ENCODE measurements at regions of chr13 and their contacts with region 1.

Region 1: DNA sequence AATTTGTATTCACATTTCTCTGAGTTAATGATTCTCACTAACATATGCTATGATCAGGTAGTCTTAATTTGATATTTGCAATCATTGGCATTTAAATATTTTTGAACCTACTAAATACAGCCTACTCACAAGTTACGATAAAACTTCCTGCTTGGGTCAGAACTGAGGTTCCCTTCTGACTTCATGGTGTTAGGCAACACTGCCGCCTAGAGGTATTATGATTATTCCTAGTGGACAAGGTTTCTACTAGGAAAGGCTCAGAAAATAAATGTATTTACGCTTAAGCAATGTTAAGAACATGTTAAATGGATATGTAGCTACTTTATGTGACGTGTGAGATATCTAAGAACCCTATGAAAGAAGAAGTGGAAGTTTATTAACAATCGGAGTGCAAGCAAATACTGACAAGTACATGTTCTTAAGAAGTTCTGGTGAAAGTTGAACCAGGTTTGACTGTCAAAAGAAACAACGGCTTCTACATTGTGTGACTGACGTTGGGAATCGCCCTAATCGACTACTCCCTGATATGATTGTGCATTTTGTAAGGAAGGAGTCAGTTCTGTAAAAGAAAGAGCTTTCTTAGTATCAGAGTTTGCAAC is 1395.8 kb downstream of the SLITRK5 start:
- DNase-seq: peak; percentile 12
- ATAC-seq: no peak
- H3K4me3 ChIP-seq: no peak overlapping the region
- H3K27ac ChIP-seq: no peak overlapping the region
- H3K4me1 ChIP-seq: no peaks in the 10 kb centered on the region; the same call in 1 of the 2 replicates
- H3K27me3 ChIP-seq: no peaks in the 10 kb centered on the region
- CTCF ChIP-seq: peak; percentile 67; the same call in 1 of the 2 replicates

Region 2: DNA sequence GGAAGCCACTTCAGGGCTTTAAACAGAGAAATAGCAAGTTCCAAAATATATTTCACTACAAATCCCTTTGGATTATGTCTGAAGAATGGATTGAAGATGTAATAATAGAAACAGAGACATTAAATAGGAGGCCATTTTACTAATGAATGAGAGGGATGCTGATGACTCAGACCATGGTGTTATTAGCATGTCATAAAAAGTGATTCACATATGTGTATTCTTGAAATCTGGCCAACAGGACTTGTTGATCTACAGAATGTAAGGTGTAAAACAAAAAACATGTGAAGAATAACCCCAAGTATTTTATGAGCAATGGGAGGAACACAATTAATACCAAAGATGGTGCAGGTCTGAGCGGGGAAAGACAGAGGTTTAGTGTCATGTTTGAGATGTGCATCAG is 522.1 kb before region 1 on chr13:
- CTCF ChIA-PET with region 1: no interaction called
- POLR2A ChIA-PET with region 1: no interaction called
- in situ Hi-C with region 1: no loop called
- intact Hi-C with region 1: no loop called
- DNase-seq: no peak
- ATAC-seq: no peak
- H3K4me3 ChIP-seq: no peak overlapping the region
- H3K27ac ChIP-seq: no peak overlapping the region
- H3K4me1 ChIP-seq: no peaks in the 10 kb centered on the region
- H3K27me3 ChIP-seq: no peaks in the 10 kb centered on the region
- CTCF ChIP-seq: no peak

Region 3: GRCh38 chr13:88926890-88927502 is 140.0 kb before region 1 on chr13:
- CTCF ChIA-PET with region 1: no interaction called
- POLR2A ChIA-PET with region 1: no interaction called
- in situ Hi-C with region 1: no loop called
- intact Hi-C with region 1: no loop called
- DNase-seq: no peak
- ATAC-seq: no peak
- H3K4me3 ChIP-seq: no peak overlapping the region
- H3K27ac ChIP-seq: no peak overlapping the region
- H3K4me1 ChIP-seq: no peaks in the 10 kb centered on the region
- H3K27me3 ChIP-seq: no peaks in the 10 kb centered on the region
- CTCF ChIP-seq: no peak

Region 4: DNA sequence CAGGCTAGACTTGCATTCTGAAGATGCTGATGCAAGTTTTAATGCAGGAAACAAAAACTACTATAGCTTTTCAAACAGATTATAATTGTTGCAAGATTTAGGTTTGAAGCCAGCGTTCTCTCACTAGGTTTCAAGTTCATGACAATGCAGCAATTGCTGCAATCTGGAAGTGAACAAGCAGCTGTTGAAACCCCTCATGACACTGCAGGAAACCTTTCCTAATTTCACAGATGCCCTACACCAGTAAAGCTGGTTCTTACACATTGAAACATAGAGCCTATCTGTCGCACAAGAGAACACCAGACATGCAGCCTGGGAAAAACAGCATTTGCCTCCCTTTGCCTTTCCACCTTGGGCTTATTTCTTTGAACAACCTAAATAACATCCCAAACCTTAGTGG is 543.4 kb after region 1 on chr13:
- CTCF ChIA-PET with region 1: no interaction called
- POLR2A ChIA-PET with region 1: no interaction called
- in situ Hi-C with region 1: no loop called
- intact Hi-C with region 1: no loop called
- DNase-seq: no peak
- ATAC-seq: no peak
- H3K4me3 ChIP-seq: no peak overlapping the region
- H3K27ac ChIP-seq: no peak overlapping the region
- H3K4me1 ChIP-seq: no peaks in the 10 kb centered on the region
- H3K27me3 ChIP-seq: no peaks in the 10 kb centered on the region
- CTCF ChIP-seq: no peak

Region 5: DNA sequence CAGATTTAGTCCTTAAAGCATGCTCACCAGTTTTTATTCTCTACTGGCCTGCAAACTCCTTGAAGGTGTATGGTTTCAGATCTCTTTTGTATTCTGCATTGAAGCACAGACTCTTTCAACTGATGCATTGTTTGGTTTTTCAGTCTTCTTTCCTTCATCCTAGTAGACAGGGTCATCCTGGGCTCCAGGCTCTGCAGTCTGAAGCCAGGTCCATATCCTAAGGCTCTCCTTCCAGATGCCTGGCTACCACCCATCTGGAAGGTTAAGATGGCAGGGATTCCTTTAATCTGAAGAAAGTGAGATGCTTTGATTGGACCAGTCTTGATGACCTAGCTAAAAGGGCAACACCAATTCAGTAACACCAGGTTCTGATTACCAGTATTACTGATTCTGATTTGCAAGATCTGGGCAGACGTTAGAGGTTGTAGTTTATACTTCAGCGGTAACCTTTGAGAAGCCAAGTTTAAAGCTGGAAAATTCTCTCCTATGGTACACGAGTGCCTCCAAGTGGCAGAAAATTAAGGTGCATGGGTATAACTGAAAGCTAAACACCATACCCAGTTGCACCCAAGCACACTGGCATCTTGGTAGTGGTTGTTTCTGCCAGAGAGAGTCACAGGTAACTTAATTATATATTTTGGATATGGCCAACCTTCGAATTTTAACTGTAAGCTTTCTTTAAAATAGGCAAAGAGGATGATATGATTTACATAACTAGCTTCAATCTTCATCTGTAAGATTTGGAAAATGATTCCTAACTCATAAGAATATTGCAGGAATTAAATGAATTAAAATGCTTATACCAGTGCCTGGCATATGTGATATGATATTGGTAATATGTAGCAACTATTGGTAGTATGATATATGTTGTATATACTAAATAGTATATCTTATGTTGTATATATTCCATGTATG is 628.6 kb after region 1 on chr13:
- CTCF ChIA-PET with region 1: no interaction called
- POLR2A ChIA-PET with region 1: no interaction called
- in situ Hi-C with region 1: no loop called
- intact Hi-C with region 1: loop called (anchors 10 kb)
- DNase-seq: peak; percentile 22
- ATAC-seq: no peak
- H3K4me3 ChIP-seq: no peak overlapping the region
- H3K27ac ChIP-seq: no peak overlapping the region
- H3K4me1 ChIP-seq: no peaks in the 10 kb centered on the region
- H3K27me3 ChIP-seq: no peaks in the 10 kb centered on the region
- CTCF ChIP-seq: peak; percentile 73

Region 6: GRCh38 chr13:90055760-90056159 is 988.8 kb after region 1 on chr13:
- CTCF ChIA-PET with region 1: no interaction called
- POLR2A ChIA-PET with region 1: no interaction called
- in situ Hi-C with region 1: no loop called
- intact Hi-C with region 1: no loop called
- DNase-seq: no peak
- ATAC-seq: no peak
- H3K4me3 ChIP-seq: no peak overlapping the region
- H3K27ac ChIP-seq: no peak overlapping the region
- H3K4me1 ChIP-seq: no peaks in the 10 kb centered on the region
- H3K27me3 ChIP-seq: no peaks in the 10 kb centered on the region
- CTCF ChIP-seq: no peak

Measured in Panc1 (cell line).